ENCODE measurements at regions of chr1 and their contacts with region 1.

Region 1: DNA sequence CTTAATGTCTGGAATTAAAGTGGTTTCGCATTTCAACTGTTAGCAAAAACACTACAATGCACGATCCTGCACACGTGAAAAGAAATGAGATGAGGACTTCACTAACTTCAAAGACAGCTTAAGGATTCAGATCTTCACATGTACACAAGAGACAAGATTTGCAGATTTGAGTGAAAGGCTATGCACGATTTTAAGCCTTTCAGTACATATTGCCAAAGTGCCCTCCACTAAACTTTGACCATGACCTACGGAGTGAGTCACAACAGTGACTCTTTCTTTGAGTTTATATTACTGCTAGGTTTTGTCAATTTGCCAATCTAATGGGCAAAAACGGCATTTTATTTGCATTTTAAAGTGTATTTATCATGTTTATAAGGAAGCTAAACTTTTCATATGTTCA is 41.2 kb upstream of the CR1L start:
- H3K4me3 ChIP-seq: no peak overlapping the region
- H3K27ac ChIP-seq: no peak overlapping the region
- H3K4me1 ChIP-seq: no peaks in the 10 kb centered on the region
- CTCF ChIP-seq: no peak

Region 2: DNA sequence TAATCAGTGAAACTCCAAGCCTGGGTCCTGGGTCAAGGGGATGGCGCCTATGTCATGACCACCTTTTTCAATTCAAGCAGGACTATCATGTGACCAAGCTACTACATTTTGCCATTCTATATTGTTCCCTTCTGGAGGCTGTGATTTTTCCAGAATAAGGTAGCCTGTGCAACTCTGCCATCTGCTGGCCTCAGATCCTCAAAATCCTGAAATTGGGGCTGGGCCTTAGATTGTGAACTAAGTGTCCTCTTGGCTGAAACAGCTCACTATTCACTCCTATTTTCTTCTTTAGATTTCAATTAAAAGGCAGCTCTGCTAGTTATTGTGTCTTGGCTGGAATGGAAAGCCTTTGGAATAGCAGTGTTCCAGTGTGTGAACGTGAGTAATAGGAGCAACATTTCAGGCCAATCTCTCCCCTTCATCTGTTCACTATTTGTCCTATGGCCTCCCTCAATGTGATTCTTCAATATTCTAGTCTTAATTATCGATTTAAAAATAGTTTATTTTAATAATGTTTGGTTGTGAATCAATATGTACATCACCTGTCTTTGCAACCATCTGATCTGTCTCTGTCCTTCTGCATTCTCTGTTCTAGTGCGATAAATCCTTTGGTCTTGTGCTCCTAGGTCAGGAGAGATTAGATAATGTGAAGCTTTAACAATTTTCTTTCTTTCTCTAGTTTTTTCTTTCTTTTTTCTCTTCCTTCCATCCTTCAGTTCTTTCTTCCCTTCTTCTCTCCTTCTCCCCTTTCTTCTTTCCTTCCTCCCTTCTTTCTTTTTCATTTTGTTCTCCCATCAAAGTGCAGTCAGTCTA is 38.0 kb before region 1 on chr1:
- CTCF ChIA-PET with region 1: no interaction called
- POLR2A ChIA-PET with region 1: no interaction called
- H3K4me3 ChIP-seq: no peak overlapping the region
- H3K27ac ChIP-seq: no peak overlapping the region
- H3K4me1 ChIP-seq: no peaks in the 10 kb centered on the region
- CTCF ChIP-seq: no peak

Region 3: GRCh38 chr1:207619871-207620542 is 16.2 kb after region 1 on chr1:
- CTCF ChIA-PET with region 1: interaction called, 22 read pairs
- POLR2A ChIA-PET with region 1: no interaction called
- H3K4me3 ChIP-seq: no peak overlapping the region
- H3K27ac ChIP-seq: no peak overlapping the region
- H3K4me1 ChIP-seq: no peaks in the 10 kb centered on the region
- CTCF ChIP-seq: peak; percentile 40; the same call in 1 of the 2 replicates

Region 4: DNA sequence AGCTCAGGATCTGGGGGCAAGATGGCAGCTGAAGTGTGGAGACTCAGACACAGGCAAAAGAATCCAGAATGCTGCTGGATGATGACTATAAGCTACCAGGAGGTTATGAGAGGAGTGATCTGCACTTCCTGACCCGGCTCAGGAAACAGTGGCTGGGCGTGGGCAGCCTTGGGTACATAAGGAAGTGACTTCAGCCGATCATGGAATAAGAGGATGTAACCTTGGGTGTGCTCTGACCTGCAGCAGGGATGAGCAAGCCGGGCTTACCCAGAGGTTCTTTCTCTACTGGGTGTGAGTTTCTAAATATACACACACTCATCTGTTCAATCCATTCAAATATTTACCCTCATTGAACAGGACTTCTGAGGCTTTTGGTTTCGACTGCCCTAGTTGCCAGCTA is 244.5 kb after region 1 on chr1:
- CTCF ChIA-PET with region 1: no interaction called
- POLR2A ChIA-PET with region 1: no interaction called
- H3K4me3 ChIP-seq: no peak overlapping the region
- H3K27ac ChIP-seq: no peak overlapping the region
- H3K4me1 ChIP-seq: no peaks in the 10 kb centered on the region
- CTCF ChIP-seq: no peak

Measured in HEK293 (cell line).